ENCODE measurements at regions of chr3 and their contacts with region 1.

Region 1: DNA sequence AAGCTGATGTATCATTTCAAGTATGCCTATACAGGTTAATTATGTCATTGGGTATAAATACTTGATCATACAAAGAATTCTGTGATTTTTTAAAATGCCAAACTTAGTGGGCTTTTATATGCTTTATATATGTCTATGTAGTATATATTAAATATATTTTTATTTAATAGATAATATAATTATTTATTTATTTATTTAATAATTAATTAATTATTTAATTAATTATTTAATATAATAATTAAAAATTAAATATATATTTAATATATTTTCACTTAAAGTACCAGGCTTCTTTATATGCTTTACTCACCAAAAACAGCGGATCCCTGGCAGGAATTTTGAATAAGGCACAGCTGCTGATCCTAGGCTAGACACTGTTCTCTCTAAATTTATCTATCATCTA is 687.0 kb downstream of the VGLL3 start:
- DNase-seq: no peak
- ATAC-seq: no peak
- H3K4me3 ChIP-seq: no peak overlapping the region
- H3K4me3 Mint-ChIP-seq: no peak overlapping the region
- H3K27ac ChIP-seq: no peak overlapping the region
- H3K27ac Mint-ChIP-seq: no peak overlapping the region
- H3K4me1 ChIP-seq: no peaks in the 10 kb centered on the region
- H3K4me1 Mint-ChIP-seq: no peaks in the 10 kb centered on the region
- H3K27me3 ChIP-seq: no peaks in the 10 kb centered on the region
- H3K27me3 Mint-ChIP-seq: no peaks in the 10 kb centered on the region
- CTCF ChIP-seq: no peak

Region 2: GRCh38 chr3:86837871-86838270 is 533.9 kb after region 1 on chr3:
- CTCF ChIA-PET with region 1: no interaction called
- POLR2A ChIA-PET with region 1: no interaction called
- intact Hi-C with region 1: loop called in 1 of 2 experiments (anchors 5 kb)
- DNase-seq: no peak
- ATAC-seq: no peak
- H3K4me3 ChIP-seq: no peak overlapping the region
- H3K4me3 Mint-ChIP-seq: no peak overlapping the region
- H3K27ac ChIP-seq: no peak overlapping the region
- H3K27ac Mint-ChIP-seq: no peak overlapping the region
- H3K4me1 ChIP-seq: no peaks in the 10 kb centered on the region
- H3K4me1 Mint-ChIP-seq: no peaks in the 10 kb centered on the region
- H3K27me3 ChIP-seq: no peaks in the 10 kb centered on the region
- H3K27me3 Mint-ChIP-seq: no peaks in the 10 kb centered on the region
- CTCF ChIP-seq: no peak

Measured in CD4-positive, alpha-beta T cell (primary cell).